ENCODE measurements at regions of chr9 and their contacts with region 1.

Region 1: DNA sequence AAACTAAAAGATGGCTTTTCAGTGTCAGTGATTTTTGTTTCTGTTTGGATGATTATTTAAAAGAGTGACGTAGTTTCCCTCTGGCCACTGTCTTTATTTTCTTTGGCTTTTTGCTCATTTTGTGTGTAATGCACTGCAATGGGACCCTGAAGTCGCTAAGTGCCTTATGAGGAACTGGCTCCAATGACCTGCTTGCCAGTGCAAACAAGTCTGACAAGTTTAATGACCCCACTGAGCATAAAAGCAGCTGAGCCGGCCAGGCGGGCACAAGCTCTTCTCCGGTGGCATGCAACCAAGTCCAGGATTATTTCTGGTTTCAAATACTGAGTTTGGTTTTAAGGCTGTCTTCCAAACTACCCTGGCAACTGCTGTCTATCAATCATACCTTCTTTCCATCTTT is 15.6 kb upstream of the GNA14 start:
- DNase-seq: peak; percentile 54
- H3K4me3 ChIP-seq: no peak overlapping the region
- H3K27ac ChIP-seq: no peak overlapping the region
- H3K4me1 ChIP-seq: peaks cover 0 to 14% (median 7%) of the 10 kb centered on the region in 4 donors
- H3K27me3 ChIP-seq: no peaks in the 10 kb centered on the region
- CTCF ChIP-seq: no peak
- EP300 ChIP-seq: no peak
- POLR2A ChIP-seq: no peak

Region 2: DNA sequence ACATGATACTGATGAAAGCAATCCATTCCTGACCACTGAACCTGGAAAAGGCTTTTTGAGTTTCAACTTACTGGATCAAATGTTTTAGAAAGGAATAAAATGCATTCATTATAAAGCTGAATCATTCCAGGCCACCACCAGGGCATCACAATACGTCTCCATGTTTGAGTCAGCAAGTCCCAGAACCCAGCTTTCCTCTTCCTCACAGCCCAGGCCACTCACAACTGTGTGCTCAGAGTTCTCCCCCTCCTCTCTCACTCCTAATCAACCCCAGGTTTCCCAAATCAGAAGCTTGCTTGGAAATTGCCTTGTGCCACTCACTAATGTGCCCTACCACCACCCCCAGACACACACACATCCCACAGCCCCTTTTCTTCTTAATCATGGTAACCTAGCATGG is 107.4 kb before region 1 on chr9:
- in situ Hi-C with region 1: no loop called
- intact Hi-C with region 1: no loop called
- DNase-seq: no peak
- H3K4me3 ChIP-seq: no peak overlapping the region
- H3K27ac ChIP-seq: no peak overlapping the region
- H3K4me1 ChIP-seq: peaks cover 0 to 7% (median 0%) of the 10 kb centered on the region in 4 donors
- H3K27me3 ChIP-seq: no peaks in the 10 kb centered on the region
- CTCF ChIP-seq: no peak
- EP300 ChIP-seq: no peak
- POLR2A ChIP-seq: no peak

Region 3: GRCh38 chr9:77751341-77752091 is 87.8 kb after region 1 on chr9:
- in situ Hi-C with region 1: loop called in 1 of 4 experiments (anchors 25 kb)
- intact Hi-C with region 1: no loop called
- DNase-seq: no peak
- H3K4me3 ChIP-seq: no peak overlapping the region
- H3K27ac ChIP-seq: peak overlapping the region; percentile 37 to 68 (median 62)
- H3K4me1 ChIP-seq: peaks cover 9 to 29% (median 20%) of the 10 kb centered on the region in 4 donors
- H3K27me3 ChIP-seq: no peaks in the 10 kb centered on the region
- CTCF ChIP-seq: peak; percentile 50 to 62 (median 54)
- EP300 ChIP-seq: no peak
- POLR2A ChIP-seq: no peak

Region 4: GRCh38 chr9:78035383-78035993 is 371.7 kb after region 1 on chr9:
- in situ Hi-C with region 1: loop called in 1 of 4 experiments (anchors 25 kb)
- intact Hi-C with region 1: no loop called
- DNase-seq: peak; percentile 58
- H3K4me3 ChIP-seq: no peak overlapping the region
- H3K27ac ChIP-seq: peak overlapping the region; percentile 57 to 97 (median 79)
- H3K4me1 ChIP-seq: peaks cover 6 to 42% (median 21%) of the 10 kb centered on the region in 4 donors
- H3K27me3 ChIP-seq: no peaks in the 10 kb centered on the region
- CTCF ChIP-seq: peak; percentile 82 to 91 (median 85)
- EP300 ChIP-seq: no peak
- POLR2A ChIP-seq: no peak